MCF 10A (cell line): ENCODE measurements at regions of chr1 and their contacts with region 1.

Region 1: GRCh38 chr1:45569962-45570581 is 13.8 kb upstream of the NASP start:
- DNase-seq: peak; percentile 77
- H3K4me3 Mint-ChIP-seq: no peak overlapping the region
- H3K27ac Mint-ChIP-seq: no peak overlapping the region
- H3K4me1 Mint-ChIP-seq: no peaks in the 10 kb centered on the region
- H3K27me3 Mint-ChIP-seq: no peaks in the 10 kb centered on the region
- CTCF ChIP-seq: peak; percentile 97

Region 2: DNA sequence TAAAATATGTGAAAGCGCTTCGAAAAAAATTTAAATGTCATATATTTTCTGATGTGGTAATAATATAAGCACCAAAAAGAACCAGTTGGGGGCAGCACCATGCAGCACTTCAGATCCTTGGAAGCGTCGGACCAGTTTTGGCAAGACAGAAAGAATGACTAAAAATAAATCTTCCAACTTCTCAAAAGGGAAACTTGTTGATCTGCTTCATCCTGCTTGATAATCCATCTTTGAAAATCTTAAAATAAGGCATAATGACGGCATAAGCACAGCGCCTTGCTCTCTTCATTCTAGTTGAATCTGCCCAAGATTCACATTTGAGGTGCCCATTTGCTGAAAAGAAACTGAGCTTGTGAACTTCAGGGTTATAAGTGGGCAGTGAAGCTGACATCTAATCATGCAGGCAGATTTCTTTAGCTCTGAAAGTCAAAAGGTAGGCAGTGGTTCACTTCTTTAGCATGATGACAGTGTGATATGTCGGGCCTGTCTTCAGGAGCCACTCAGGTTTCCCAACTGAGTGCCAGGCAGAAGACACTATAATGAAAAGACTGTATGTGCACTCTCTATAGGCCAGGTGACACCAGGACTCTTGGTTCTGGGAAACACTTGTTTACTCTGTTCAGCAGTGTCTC is 210.1 kb before region 1 on chr1:
- CTCF ChIA-PET with region 1: interaction called, 26 read pairs
- POLR2A ChIA-PET with region 1: interaction called, 3 read pairs
- intact Hi-C with region 1: loop called (anchors 2 kb)
- DNase-seq: peak; percentile 70
- H3K4me3 Mint-ChIP-seq: no peak overlapping the region
- H3K27ac Mint-ChIP-seq: no peak overlapping the region
- H3K4me1 Mint-ChIP-seq: peaks cover 15% of the 10 kb centered on the region
- H3K27me3 Mint-ChIP-seq: no peaks in the 10 kb centered on the region
- CTCF ChIP-seq: peak; percentile 64

Region 3: DNA sequence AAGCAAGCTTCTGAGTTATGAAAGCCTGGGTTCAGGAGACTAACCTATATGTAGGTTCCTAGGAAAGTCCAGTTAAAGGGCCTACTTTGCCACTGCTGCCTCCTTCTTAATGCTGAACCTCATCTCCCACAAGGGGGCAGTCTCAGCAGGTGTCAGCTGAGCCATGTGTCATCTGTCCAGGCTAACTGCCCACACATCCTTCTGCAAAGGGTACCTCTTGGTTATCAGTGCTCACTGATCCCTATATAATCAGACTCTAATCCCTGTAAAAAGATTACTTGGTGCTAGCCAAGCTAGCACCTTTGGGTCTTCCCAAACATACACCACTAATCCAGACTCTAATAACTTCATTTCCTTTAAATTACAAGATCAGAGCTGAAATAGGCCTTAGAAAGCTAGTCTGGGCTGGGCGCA is 57.4 kb before region 1 on chr1:
- CTCF ChIA-PET with region 1: interaction called, 97 read pairs
- POLR2A ChIA-PET with region 1: interaction called, 30 read pairs
- intact Hi-C with region 1: loop called (anchors 1 kb)
- DNase-seq: peak; percentile 82
- H3K4me3 Mint-ChIP-seq: no peak overlapping the region
- H3K27ac Mint-ChIP-seq: no peak overlapping the region
- H3K4me1 Mint-ChIP-seq: no peaks in the 10 kb centered on the region
- H3K27me3 Mint-ChIP-seq: no peaks in the 10 kb centered on the region
- CTCF ChIP-seq: peak; percentile 67

Region 4: GRCh38 chr1:45557422-45557944 is 12.6 kb before region 1 on chr1:
- CTCF ChIA-PET with region 1: interaction called, 30 read pairs
- POLR2A ChIA-PET with region 1: interaction called, 14 read pairs
- intact Hi-C with region 1: no loop called
- DNase-seq: peak; percentile 91
- H3K4me3 Mint-ChIP-seq: peak overlapping the region; percentile 38
- H3K27ac Mint-ChIP-seq: peak overlapping the region; percentile 78
- H3K4me1 Mint-ChIP-seq: peaks cover 13% of the 10 kb centered on the region
- H3K27me3 Mint-ChIP-seq: no peaks in the 10 kb centered on the region
- CTCF ChIP-seq: no peak

Region 5: DNA sequence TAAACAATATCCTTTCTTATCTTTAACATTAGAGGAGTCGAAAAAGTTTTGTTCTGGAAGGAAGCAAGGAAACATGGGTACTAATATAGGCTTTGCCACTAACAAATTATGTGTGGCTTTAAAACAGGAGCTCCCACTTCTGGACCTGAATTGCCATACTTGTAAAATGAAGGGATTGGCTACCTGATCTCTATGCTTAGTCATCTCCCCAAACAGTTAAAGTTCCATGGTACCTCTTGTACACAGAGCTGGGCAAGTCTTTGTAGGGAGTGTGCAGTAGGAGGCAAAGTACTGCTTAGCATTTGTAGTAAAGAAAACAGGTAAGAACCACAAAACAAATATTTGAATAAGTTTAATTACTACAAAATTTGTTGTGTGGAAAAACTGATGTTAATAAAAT is 314.6 kb after region 1 on chr1:
- CTCF ChIA-PET with region 1: no interaction called
- POLR2A ChIA-PET with region 1: no interaction called
- intact Hi-C with region 1: loop called (anchors 2 kb)
- DNase-seq: peak; percentile 22
- H3K4me3 Mint-ChIP-seq: no peak overlapping the region
- H3K27ac Mint-ChIP-seq: peak overlapping the region; percentile 12
- H3K4me1 Mint-ChIP-seq: peaks cover 17% of the 10 kb centered on the region
- H3K27me3 Mint-ChIP-seq: no peaks in the 10 kb centered on the region
- CTCF ChIP-seq: no peak